ENCODE measurements at regions of chr16 and their contacts with region 1.

Region 1: DNA sequence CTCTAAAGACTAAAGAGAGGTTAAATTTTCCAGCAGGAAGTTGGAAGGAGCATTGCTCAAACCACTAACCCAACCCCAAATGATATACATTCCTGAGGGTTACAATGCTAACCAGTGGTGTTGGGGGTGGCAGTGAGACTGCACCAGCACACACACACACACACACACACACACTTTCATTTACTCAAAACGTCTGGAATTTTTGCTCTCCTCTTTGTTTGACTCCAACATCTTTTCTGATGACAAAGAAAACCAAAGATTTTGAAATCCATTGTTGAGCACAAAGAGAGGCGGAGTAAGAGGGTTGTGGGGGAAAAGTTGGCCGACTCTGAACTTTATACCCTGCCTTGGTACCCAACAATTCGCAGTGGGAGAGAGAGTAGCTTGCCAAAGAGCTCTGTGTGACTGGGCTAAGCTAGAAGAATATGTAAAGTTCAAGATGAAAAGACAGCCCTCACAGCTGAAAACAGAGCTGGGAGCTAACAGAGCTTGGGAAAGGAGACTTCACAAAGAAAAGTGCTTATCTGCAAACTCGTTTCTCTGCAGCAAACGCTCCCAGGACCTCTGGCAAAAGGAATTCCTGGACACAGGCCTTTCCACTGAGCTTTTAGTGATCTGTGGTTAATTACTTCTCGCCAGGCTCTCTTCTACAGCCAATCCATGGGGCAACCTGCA is 426.0 kb upstream of the CDH11 start:
- DNase-seq: peak; percentile 45
- H3K4me3 ChIP-seq: no peak overlapping the region
- H3K27ac ChIP-seq: peak overlapping the region; percentile 98
- H3K4me1 ChIP-seq: peaks cover 64% of the 10 kb centered on the region
- H3K27me3 ChIP-seq: no peaks in the 10 kb centered on the region
- CTCF ChIP-seq: no peak

Region 2: GRCh38 chr16:64991001-64991400 is 556.9 kb before region 1 on chr16:
- CTCF ChIA-PET with region 1: no interaction called
- POLR2A ChIA-PET with region 1: no interaction called
- intact Hi-C with region 1: loop called (anchors 2 kb)
- DNase-seq: peak; percentile 54
- H3K4me3 ChIP-seq: no peak overlapping the region
- H3K27ac ChIP-seq: peak overlapping the region; percentile 66
- H3K4me1 ChIP-seq: peaks cover 65% of the 10 kb centered on the region
- H3K27me3 ChIP-seq: no peaks in the 10 kb centered on the region
- CTCF ChIP-seq: no peak

Region 3: DNA sequence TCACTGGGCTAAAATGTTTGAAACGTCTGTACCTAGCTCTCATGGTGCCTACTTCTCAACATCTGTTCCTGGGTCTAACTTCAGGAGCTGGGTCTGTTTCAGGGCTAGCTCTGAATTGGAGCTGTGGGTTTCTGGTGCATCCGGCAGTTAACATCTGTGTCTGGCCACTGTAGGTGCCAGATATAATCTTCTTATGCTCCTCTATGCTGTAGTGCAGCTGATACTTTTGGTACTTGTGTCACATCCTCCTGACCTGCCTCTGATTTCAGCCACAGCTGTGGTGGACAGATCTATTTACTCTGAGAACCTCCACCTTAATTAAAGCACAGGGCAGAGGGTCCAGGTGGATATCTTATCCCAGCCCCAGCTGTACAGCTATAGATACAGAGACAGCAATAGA is 70.4 kb after region 1 on chr16:
- CTCF ChIA-PET with region 1: no interaction called
- POLR2A ChIA-PET with region 1: no interaction called
- intact Hi-C with region 1: loop called (anchors 2 kb)
- DNase-seq: peak; percentile 9
- H3K4me3 ChIP-seq: no peak overlapping the region
- H3K27ac ChIP-seq: peak overlapping the region; percentile 43
- H3K4me1 ChIP-seq: peaks cover 31% of the 10 kb centered on the region
- H3K27me3 ChIP-seq: no peaks in the 10 kb centered on the region
- CTCF ChIP-seq: no peak

Region 4: DNA sequence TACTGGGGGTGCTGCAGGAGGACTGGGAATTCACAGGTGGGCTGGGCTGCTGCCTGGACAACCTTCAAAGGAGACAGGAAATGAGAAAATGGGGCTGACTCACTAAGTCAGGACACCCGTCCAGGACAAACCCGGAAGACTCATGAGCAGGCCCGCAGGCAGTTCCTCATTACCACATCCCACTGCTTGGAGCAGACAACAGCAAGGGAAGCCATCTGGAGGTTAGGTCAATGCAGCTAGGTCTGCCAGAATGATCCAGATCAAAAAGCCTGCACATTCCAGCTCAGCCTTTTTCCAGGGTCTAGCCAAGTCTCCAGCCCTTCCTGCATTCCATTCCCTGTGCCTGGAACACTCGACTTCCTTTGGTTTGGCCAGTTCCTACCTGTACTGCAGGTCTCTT is 110.4 kb after region 1 on chr16:
- CTCF ChIA-PET with region 1: no interaction called
- POLR2A ChIA-PET with region 1: interaction called, 7 read pairs
- intact Hi-C with region 1: loop called (anchors 2 kb)
- DNase-seq: peak; percentile 76
- H3K4me3 ChIP-seq: no peak overlapping the region
- H3K27ac ChIP-seq: no peak overlapping the region
- H3K4me1 ChIP-seq: peaks cover 40% of the 10 kb centered on the region
- H3K27me3 ChIP-seq: no peaks in the 10 kb centered on the region
- CTCF ChIP-seq: no peak

Region 5: DNA sequence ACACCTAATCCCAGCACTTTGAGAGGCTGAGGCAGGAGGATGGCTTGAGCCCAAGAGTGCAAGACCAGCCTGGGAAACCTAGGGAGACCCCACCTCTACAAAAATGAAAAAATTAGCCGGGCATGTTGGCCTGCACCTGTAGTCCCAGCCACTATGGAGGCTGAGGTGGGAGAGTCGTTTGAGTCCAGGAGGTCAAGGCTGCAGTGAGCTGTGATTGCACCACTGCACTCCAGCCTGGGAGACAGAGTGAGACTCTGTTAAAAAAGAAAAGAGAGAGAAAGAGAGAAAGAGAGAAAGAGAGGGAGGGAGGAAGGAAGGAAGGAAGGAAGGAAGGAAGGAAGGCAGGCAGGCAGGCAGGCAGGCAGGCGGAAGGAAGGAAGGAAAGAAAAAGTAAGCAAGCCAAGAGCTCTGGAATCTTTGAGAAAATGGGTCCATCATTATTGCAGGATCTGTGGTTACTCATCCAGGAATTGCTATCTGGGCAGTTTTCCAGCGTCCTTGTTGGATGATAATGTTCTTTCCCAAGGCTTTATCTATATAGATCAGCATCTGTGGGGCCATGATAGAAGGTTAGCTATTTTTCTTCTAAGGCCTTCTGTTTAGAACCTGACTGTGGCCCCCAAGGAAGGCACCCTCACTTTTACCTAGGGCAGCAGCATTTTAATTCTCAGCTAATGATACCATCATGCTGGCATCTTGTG is 285.4 kb after region 1 on chr16:
- CTCF ChIA-PET with region 1: interaction called, 7 read pairs
- POLR2A ChIA-PET with region 1: interaction called, 15 read pairs
- intact Hi-C with region 1: loop called (anchors 1 kb)
- DNase-seq: peak; percentile 94
- H3K4me3 ChIP-seq: no peak overlapping the region
- H3K27ac ChIP-seq: peak overlapping the region; percentile 97
- H3K4me1 ChIP-seq: peaks cover 56% of the 10 kb centered on the region
- H3K27me3 ChIP-seq: no peaks in the 10 kb centered on the region
- CTCF ChIP-seq: no peak

Region 6: DNA sequence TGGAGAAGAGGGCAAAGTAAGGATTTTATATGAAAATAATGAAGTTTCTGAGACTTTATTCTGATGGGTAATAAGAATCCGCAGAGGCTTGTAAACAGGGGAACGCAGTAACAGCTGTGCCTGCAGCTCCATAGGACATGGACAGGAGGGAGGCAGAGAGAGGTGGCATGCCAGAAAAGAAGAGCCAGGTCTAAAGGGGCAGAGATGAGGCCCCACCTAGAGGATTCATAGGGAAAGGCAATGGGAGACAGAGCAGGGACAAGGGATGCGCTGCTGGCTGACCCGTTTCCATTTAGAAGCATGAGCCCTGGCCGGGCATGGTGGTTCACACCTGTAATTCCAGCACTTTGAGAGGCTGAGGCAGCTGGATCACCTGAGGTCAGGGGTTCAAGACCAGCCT is 478.3 kb after region 1 on chr16:
- CTCF ChIA-PET with region 1: no interaction called
- POLR2A ChIA-PET with region 1: no interaction called
- intact Hi-C with region 1: loop called (anchors 10 kb)
- DNase-seq: peak; percentile 45
- H3K4me3 ChIP-seq: no peak overlapping the region
- H3K27ac ChIP-seq: no peak overlapping the region
- H3K4me1 ChIP-seq: no peaks in the 10 kb centered on the region
- H3K27me3 ChIP-seq: no peaks in the 10 kb centered on the region
- CTCF ChIP-seq: peak; percentile 41

Region 7: DNA sequence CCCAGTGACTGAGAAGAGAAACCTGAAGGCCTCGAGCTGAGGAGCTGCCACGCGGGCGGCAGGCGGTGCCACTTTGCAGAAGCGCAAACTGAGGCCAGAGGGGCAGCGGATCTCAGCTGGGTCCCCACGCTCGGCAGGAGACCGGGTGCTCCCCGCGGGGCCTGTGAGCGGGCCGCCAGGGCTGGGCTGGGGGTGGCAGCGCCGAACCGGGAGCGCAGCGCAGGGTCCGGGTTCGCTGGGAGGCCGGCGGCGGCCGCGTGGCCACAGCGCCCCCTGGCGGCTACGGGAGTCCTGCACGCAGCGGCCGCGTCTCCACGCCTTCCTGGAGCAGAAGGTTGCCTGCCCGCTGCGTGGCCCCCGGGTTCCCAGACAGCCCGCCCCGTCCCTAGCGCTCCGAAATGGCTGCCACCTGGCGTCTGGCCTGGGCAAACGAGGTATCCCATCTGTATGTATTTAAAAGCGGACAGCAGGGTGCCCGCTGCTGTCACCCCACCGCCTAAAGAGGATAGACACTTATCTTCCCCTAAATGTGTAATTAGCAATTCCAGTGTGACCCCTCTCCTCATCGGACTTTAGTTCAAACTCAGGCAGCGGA is 722.5 kb after region 1 on chr16:
- CTCF ChIA-PET with region 1: no interaction called
- POLR2A ChIA-PET with region 1: interaction called, 4 read pairs
- intact Hi-C with region 1: loop called (anchors 2 kb)
- DNase-seq: peak; percentile 90
- H3K4me3 ChIP-seq: no peak overlapping the region
- H3K27ac ChIP-seq: peak overlapping the region; percentile 78
- H3K4me1 ChIP-seq: peaks cover 50% of the 10 kb centered on the region
- H3K27me3 ChIP-seq: no peaks in the 10 kb centered on the region
- CTCF ChIP-seq: peak; percentile 81